Activated T-helper 2 cell treated with anti-CD3 and anti-CD28 coated beads, Interferon-gamma antibody, Interleukin-2, Interleukin-4, amounts not matched to agents 10 μg/mL and 5 μg/mL and 100 μg/mL, durations not matched to agents 14 hours and 24 hours and 36 hours (primary cell): ENCODE measurements at regions of chr13 and their contacts with region 1.

Region 1: DNA sequence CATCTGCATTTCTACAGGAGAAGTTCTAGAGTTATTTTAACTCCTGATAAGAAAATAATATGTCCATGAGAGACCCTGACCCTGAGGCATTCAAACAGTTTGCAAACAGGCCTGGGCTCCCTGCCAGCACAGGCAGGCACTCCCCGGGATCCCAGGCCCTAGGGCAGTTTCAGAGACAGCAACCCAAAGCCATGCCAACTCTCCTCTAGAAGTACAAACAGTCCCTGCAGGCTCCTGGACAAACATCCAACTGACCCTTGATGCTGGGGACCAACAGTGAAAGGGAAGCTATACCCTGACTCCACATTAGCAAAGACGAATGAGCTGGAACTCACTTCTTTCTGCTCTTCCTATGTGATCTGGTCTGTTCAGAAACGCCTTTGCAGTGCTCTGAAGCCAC is 44.8 kb downstream of the CCDC70 start:
- DNase-seq: no peak
- H3K4me3 Mint-ChIP-seq: no peak overlapping the region
- H3K27ac Mint-ChIP-seq: no peak overlapping the region
- H3K4me1 Mint-ChIP-seq: peaks cover 46% of the 10 kb centered on the region
- H3K27me3 Mint-ChIP-seq: peaks cover 1% of the 10 kb centered on the region

Region 2: GRCh38 chr13:51825165-51825592 is 81.4 kb before region 1 on chr13:
- intact Hi-C with region 1: loop called (anchors 5 kb)
- DNase-seq: no peak
- H3K4me3 Mint-ChIP-seq: peak overlapping the region; percentile 32
- H3K27ac Mint-ChIP-seq: peak overlapping the region; percentile 33
- H3K4me1 Mint-ChIP-seq: peaks cover 69% of the 10 kb centered on the region
- H3K27me3 Mint-ChIP-seq: peaks cover 53% of the 10 kb centered on the region

Region 3: GRCh38 chr13:51959773-51960172 is 53.2 kb after region 1 on chr13:
- intact Hi-C with region 1: loop called (anchors 10 kb)
- DNase-seq: no peak
- H3K4me3 Mint-ChIP-seq: no peak overlapping the region
- H3K27ac Mint-ChIP-seq: no peak overlapping the region
- H3K4me1 Mint-ChIP-seq: peaks cover 44% of the 10 kb centered on the region
- H3K27me3 Mint-ChIP-seq: no peaks in the 10 kb centered on the region